Activated CD8-positive, alpha-beta T cell treated with anti-CD3 and anti-CD28 coated beads, Interleukin-2, amount 10 ng/mL, durations not matched to agents 7 days and 5 days (primary cell): ENCODE measurements at regions of chr21 and their contacts with region 1.

Region 1: DNA sequence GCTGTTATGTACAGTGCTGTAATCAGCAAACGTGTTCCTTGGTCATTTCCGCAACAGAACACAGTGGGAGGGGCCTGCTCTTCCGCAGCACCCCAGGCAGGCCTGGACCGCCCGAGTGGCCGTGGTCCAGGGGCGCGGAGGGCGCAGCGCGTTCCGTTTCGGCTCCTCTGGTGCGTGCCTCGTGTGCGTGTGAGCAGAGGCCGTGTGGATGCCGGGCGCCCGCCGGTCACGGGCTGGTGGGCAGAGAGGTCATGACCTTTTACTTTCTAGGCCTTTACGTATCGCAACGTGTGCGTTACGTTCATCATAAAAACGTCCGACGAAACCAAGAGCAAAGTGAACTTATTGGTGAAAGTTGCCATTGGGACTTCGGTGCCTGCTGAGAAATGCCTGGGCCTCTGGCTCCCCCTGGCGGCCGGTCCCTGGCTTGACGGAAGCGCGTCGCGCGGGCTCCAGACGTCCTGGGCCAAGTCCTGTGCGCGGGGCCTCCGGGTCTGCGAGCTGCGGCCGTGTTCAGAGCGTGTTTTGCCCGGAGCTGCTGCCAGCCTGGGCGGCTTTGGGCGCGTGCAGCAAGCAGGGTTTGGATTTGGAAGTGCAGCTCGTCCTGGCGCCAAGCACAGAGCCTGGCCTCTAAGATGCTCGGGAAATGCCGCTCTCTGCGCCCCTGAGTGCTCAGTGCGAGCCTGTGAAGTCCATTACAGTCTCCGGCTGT is 34.4 kb downstream of the COL18A1 start:
- DNase-seq: peak; percentile 88
- ATAC-seq: peak; percentile 95
- H3K4me3 Mint-ChIP-seq: peak overlapping the region; percentile 28
- H3K27ac Mint-ChIP-seq: peak overlapping the region; percentile 55
- H3K4me1 Mint-ChIP-seq: peaks cover 9% of the 10 kb centered on the region
- H3K27me3 Mint-ChIP-seq: peaks cover 3% of the 10 kb centered on the region

Region 2: DNA sequence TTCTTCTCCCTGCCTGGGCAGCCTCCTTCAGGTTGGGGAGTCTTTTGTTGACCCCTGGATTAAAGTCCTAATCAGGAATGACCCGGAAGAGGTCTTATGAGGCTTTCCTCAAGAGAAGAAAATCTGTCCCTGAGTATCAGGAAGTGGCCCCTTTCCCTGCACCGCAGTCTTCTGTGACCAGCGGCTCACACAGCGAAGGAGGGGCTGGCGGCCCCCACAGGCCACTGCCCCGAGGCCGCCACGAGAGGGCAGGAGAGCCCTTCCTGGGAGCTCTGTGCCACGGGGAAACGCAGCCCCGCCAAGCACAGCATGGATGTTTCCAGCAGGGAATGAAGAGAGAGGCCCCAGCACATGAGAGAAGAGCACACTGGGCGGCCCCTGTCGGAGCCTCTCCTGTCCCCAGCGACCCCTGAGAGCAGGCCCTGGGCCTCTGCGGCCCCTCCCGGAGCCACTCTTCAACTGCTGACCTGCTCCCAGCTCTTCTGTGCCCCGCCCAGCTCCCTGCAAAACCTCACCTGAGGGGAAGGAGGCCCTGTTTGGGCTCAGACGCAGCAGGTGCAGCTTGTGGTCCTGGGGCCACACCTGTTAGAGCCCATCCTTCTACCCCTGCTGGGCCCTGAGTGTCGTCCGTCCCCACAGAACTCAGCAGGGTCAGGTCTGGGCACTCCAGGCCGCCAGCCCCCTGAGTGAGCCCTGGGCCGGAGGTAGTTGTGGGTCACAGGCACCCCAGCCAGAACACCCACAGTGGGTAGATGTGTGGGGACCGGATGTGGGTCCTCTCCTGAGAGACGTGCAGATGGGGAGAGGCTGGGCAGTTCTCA is 146.7 kb before region 1 on chr21:
- CTCF ChIA-PET with region 1: interaction called, 11 read pairs
- POLR2A ChIA-PET with region 1: interaction called, 3 read pairs
- DNase-seq: peak; percentile 75
- ATAC-seq: peak; percentile 65
- H3K4me3 Mint-ChIP-seq: no peak overlapping the region
- H3K27ac Mint-ChIP-seq: peak overlapping the region; percentile 34
- H3K4me1 Mint-ChIP-seq: peaks cover 17% of the 10 kb centered on the region
- H3K27me3 Mint-ChIP-seq: peaks cover 9% of the 10 kb centered on the region

Region 3: DNA sequence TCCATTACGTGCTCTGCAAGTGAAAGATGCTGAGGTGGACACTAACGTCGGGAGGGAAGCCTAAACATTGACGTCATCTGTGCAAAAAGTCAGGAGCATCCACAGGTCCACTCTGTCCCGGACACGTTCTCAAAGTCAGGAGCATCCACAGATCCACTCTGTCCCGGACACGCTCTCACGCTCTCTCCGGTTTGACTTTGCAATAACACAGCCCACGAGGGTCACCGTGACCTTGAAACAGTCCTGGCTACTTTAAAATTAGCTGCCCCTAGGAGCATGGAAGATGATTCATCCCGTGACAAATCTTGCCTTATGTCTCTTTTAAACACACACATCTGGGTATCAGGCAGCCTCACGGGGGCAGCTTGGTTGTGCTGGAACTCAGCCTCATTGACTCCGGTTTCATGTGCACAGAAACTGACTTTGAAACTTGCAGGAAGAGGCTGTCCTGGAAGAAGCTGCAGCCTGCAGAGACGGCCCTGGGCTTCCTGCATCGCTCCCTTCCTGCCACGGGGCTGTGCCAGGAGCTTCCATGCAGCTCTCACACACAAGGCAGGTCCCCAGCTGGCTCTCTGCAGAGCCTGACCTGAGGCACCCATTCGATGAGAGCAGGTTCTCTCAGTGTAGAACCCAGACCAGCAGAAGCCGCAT is 52.5 kb before region 1 on chr21:
- CTCF ChIA-PET with region 1: no interaction called
- POLR2A ChIA-PET with region 1: no interaction called
- DNase-seq: no peak
- ATAC-seq: no peak
- H3K4me3 Mint-ChIP-seq: no peak overlapping the region
- H3K27ac Mint-ChIP-seq: no peak overlapping the region
- H3K4me1 Mint-ChIP-seq: no peaks in the 10 kb centered on the region
- H3K27me3 Mint-ChIP-seq: no peaks in the 10 kb centered on the region